Posterior cingulate gyrus (tissue), 11 donors: ENCODE measurements at regions of chr15 and their contacts with region 1.

Region 1: GRCh38 chr15:48645558-48646330 is at the start of gene FBN1:
- DNase-seq: peak; percentile 56 to 97 (median 74)

Region 2: GRCh38 chr15:48459571-48460470 is 185.9 kb before region 1 on chr15:
- intact Hi-C with region 1: no loop called
- DNase-seq: no peak

Region 3: GRCh38 chr15:48703544-48703943 is 57.8 kb after region 1 on chr15:
- intact Hi-C with region 1: no loop called
- DNase-seq: no peak

Region 4: DNA sequence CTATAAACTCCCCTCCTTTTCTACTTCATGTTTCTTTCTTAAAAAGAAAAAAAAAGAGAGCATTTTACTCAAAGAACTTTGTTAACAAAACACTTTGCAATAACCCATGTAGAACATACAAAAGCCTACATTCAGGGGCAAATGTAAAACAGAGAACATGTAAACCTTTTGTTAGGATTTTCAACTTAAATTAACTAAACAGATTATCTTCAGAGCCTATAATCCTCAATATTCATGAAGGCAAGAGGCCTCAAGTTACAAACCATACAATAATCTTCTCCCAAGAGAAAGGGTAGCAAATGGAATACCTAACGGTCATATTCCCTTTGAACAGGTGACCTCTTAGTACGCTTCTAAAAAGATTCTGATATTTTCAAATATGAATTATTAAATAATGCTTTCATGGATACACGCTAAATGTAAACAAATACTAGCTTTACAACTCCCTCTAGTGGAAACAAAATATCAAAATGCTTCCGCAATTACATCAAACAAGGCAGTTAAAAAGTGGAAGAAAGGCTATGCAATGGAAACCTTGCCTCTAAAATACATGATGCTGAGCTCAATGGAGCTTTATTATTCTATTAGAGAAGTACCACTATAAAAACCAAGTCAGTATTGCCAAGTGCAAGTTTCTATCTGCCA is 155.2 kb after region 1 on chr15:
- intact Hi-C with region 1: loop called (anchors 5 kb)
- DNase-seq: no peak